Activated T-helper 1 cell treated with anti-CD3 and anti-CD28 coated beads, Interleukin-12 subunit alpha, Interleukin-12 subunit beta, Interleukin-2, Interleukin-4 antibody, amounts not matched to agents 30 ng/mL and 10 ng/mL and 1 ng/mL, durations not matched to agents 14 hours and 24 hours and 36 hours (primary cell): ENCODE measurements at regions of chr5 and their contacts with region 1.

Region 1: GRCh38 chr5:119367502-119368237 is 11.9 kb downstream of the TNFAIP8 start:
- DNase-seq: no peak
- H3K4me3 Mint-ChIP-seq: peak overlapping the region; percentile 84
- H3K27ac Mint-ChIP-seq: peak overlapping the region; percentile 95
- H3K4me1 Mint-ChIP-seq: peaks cover 85% of the 10 kb centered on the region
- H3K27me3 Mint-ChIP-seq: no peaks in the 10 kb centered on the region

Region 2: DNA sequence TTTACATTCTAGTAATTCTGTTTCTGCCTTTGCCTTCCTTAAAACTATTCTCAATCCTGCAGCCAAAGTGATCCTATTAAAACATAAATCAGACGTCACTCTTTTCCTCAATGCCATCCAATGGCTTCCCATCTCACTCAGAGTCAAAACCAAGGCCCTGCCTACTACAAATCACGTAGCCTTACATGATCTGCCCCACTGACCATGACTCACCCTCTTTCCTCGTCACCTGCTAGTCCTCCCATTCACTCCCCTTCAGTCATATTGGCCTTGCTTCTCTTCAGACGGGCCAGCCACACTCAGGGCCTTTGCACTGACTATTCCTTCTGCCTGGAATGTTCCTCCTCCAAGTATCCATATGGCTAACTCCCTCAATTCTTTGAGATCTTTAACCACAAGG is 335.8 kb before region 1 on chr5:
- intact Hi-C with region 1: loop called (anchors 1 kb)
- DNase-seq: no peak
- H3K4me3 Mint-ChIP-seq: peak overlapping the region; percentile 45
- H3K27ac Mint-ChIP-seq: peak overlapping the region; percentile 21
- H3K4me1 Mint-ChIP-seq: peaks cover 35% of the 10 kb centered on the region
- H3K27me3 Mint-ChIP-seq: peaks cover 2% of the 10 kb centered on the region

Region 3: DNA sequence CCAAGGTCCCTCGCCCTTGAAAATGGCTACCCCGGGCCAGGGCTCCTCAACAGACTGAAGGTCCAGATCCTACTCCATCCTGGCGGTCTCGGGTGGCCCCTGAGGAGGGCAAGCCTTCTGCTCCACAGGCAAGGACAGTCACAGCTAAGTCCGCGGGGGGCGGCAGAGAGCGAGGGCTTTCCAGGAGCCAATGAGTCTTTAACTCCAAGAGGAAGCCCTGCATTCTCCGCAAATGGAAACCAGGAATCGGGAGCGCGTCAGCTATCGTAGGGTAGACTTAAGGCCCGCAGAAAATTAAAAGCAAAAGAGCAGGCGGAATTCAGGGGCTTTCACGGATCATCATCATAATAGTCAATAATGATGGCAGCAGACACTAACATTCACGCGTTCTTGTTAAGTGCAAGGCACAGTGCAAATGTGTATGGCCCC is 99.7 kb before region 1 on chr5:
- intact Hi-C with region 1: loop called (anchors 1 kb)
- DNase-seq: peak; percentile 72
- H3K4me3 Mint-ChIP-seq: peak overlapping the region; percentile 99
- H3K27ac Mint-ChIP-seq: peak overlapping the region; percentile 97
- H3K4me1 Mint-ChIP-seq: peaks cover 55% of the 10 kb centered on the region
- H3K27me3 Mint-ChIP-seq: no peaks in the 10 kb centered on the region

Region 4: DNA sequence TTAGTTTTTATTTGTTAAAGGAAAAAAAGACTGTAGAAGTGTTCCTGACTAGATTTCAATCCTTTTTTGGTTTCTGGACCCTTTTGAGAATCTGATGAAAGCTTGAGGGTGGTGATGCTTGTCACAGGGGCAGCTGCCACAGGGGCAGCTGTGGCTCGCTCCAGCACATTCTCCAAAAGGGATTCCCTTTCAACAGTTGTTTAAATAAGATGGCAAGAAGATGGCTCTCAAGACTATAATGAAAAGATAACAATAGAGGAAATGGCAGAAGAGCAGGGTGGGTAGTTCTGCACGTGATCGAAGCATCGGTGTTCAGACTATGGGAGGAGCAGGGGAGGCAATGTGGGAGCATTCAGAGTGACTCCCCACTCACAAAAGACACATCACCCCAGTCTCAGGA is 58.3 kb before region 1 on chr5:
- intact Hi-C with region 1: loop called (anchors 1 kb)
- DNase-seq: no peak
- H3K4me3 Mint-ChIP-seq: peak overlapping the region; percentile 82
- H3K27ac Mint-ChIP-seq: peak overlapping the region; percentile 96
- H3K4me1 Mint-ChIP-seq: peaks cover 92% of the 10 kb centered on the region
- H3K27me3 Mint-ChIP-seq: no peaks in the 10 kb centered on the region

Region 5: DNA sequence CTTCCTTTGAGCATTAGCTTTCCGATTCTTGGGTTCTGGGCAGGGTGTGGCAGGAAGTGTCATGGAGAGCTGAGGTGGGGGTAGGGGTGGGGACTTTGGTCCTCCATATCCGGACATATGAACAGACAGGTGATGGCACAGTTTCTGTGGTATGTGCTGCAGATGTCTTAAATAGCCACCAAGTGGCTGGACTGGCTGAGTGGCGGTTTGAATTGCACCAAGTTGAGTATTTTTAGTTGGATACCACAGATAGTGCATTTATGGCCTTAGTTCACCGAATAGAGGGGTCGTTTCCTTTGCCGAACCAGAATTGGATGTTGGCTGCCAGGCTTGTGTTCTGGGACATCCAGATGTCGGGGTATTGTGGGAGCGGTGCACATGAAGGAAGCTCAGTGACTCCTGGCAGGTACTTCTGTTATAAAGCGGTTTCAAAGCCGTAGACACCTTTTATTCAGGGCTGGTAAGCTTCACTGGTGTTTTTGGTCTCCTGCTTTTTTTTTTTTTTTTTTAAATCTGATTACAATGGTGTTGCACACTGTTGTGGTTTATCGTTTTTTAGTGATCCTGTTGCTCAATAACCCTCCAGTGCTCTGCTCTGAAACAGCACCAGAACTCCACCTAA is 27.0 kb before region 1 on chr5:
- intact Hi-C with region 1: loop called (anchors 1 kb)
- DNase-seq: peak; percentile 63
- H3K4me3 Mint-ChIP-seq: peak overlapping the region; percentile 83
- H3K27ac Mint-ChIP-seq: peak overlapping the region; percentile 100
- H3K4me1 Mint-ChIP-seq: peaks cover 95% of the 10 kb centered on the region
- H3K27me3 Mint-ChIP-seq: no peaks in the 10 kb centered on the region